OCI-LY7 (cell line): ENCODE measurements at regions of chr10 and their contacts with region 1.

Region 1: GRCh38 chr10:11757821-11758463 is 15.8 kb downstream of the ECHDC3 start:
- DNase-seq: peak; percentile 89
- H3K4me3 ChIP-seq: no peak overlapping the region
- H3K27ac ChIP-seq: no peak overlapping the region
- H3K4me1 ChIP-seq: peaks cover 6% of the 10 kb centered on the region
- CTCF ChIP-seq: peak; percentile 98

Region 2: GRCh38 chr10:11424456-11425297 is 333.3 kb before region 1 on chr10:
- CTCF ChIA-PET with region 1: interaction called, 4 read pairs
- POLR2A ChIA-PET with region 1: no interaction called
- intact Hi-C with region 1: loop called (anchors 2 kb)
- DNase-seq: peak; percentile 73
- H3K4me3 ChIP-seq: no peak overlapping the region
- H3K27ac ChIP-seq: no peak overlapping the region
- H3K4me1 ChIP-seq: no peaks in the 10 kb centered on the region
- CTCF ChIP-seq: peak; percentile 99; the same call in 1 of the 2 replicates

Region 3: GRCh38 chr10:11434324-11434723 is 323.6 kb before region 1 on chr10:
- CTCF ChIA-PET with region 1: interaction called, 3 read pairs
- POLR2A ChIA-PET with region 1: interaction called, 7 read pairs
- intact Hi-C with region 1: loop called (anchors 1 kb)
- DNase-seq: peak; percentile 59
- H3K4me3 ChIP-seq: no peak overlapping the region
- H3K27ac ChIP-seq: no peak overlapping the region
- H3K4me1 ChIP-seq: no peaks in the 10 kb centered on the region
- CTCF ChIP-seq: peak; percentile 87

Region 4: GRCh38 chr10:11472158-11472753 is 285.7 kb before region 1 on chr10:
- CTCF ChIA-PET with region 1: no interaction called
- POLR2A ChIA-PET with region 1: interaction called, 3 read pairs
- intact Hi-C with region 1: loop called (anchors 1 kb)
- DNase-seq: peak; percentile 73
- H3K4me3 ChIP-seq: no peak overlapping the region
- H3K27ac ChIP-seq: no peak overlapping the region
- H3K4me1 ChIP-seq: peaks cover 14% of the 10 kb centered on the region
- CTCF ChIP-seq: peak; percentile 97

Region 5: GRCh38 chr10:11515596-11516430 is 242.1 kb before region 1 on chr10:
- CTCF ChIA-PET with region 1: interaction called, 7 read pairs
- POLR2A ChIA-PET with region 1: interaction called, 4 read pairs
- intact Hi-C with region 1: loop called (anchors 1 kb)
- DNase-seq: peak; percentile 84
- H3K4me3 ChIP-seq: peak overlapping the region; percentile 35
- H3K27ac ChIP-seq: peak overlapping the region; percentile 65
- H3K4me1 ChIP-seq: peaks cover 30% of the 10 kb centered on the region
- CTCF ChIP-seq: peak; percentile 100

Region 6: DNA sequence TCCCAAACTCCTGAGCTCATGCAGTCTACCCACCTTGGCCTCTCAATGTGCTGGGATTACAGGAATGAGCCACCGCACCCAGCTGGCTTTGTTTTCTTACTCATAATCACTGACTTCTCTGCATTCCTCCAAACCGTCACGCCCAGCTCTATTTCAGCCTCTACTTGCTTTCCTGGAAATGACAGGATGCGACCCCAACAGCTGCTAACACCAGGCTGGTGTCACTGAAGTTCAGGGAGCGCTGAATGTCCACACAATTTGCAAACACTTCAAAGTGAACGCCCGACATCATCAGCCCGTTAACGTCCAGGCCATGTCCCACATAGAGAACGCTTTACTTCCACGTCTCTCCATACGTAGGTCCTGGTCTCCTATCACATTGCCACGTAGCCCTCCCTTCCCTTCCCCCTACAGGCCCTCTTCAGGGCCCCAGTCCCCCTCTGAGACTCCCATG is 52.4 kb after region 1 on chr10:
- CTCF ChIA-PET with region 1: no interaction called
- POLR2A ChIA-PET with region 1: no interaction called
- intact Hi-C with region 1: no loop called
- DNase-seq: no peak
- H3K4me3 ChIP-seq: no peak overlapping the region
- H3K27ac ChIP-seq: no peak overlapping the region
- H3K4me1 ChIP-seq: no peaks in the 10 kb centered on the region
- CTCF ChIP-seq: no peak